Natural killer cell (primary cell): ENCODE measurements at regions of chr6 and their contacts with region 1.

Region 1: DNA sequence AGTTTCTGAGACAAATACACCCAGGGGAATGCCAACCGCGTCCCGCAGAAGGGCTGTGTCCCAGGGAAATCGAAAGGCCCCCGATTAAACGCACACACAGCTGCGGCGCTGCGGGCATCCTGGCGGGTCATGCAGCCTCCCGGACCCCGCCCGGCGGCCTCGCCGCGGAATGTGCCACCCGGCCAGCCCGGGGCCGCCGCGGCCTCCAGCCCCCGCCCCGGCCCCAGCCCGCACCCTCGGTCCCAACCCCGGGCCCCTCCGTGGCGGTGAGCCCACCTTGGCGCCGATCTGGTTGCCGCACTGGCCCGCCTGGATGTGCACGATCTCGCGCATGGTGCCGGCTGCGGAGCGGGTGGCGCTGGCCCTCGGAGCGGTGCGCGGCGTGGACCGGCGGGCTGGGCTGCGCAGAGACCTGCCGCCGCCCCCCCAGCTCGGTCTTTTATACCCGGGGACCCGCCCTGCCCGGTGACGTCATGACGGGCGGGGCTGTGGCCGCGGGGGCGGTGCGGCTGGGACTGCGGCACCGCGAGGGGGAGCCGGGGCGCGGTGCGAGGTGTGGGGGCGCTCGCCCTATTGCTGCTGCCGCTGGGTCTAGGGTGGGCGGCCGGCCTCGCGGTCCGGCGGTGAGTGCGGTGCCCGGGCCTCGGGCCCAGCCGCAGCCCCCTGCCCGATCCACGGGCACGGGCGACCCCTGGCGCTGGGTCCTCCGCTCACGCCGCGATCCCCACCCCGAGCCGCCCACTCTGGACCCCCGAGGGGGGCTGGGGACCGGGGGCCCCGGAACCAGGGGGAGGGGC is at the start of gene TUBB2A:
- DNase-seq: peak; percentile 86 to 93
- ATAC-seq: peak; percentile 83 to 88 (median 88)
- H3K4me3 ChIP-seq: peak within 1 kb of the TSS; percentile 53
- H3K4me3 Mint-ChIP-seq: peak within 1 kb of the TSS; percentile 90
- H3K27ac ChIP-seq: no peak within 1 kb of the TSS
- H3K27ac Mint-ChIP-seq: peak within 1 kb of the TSS; percentile 66 to 68
- H3K4me1 ChIP-seq: peaks cover 27% of the 10 kb centered on the region
- H3K4me1 Mint-ChIP-seq: peaks cover 9 to 19% of the 10 kb centered on the region in 2 donors
- H3K27me3 ChIP-seq: peaks cover 3% of the 10 kb centered on the region
- H3K27me3 Mint-ChIP-seq: peaks cover 8 to 12% of the 10 kb centered on the region in 2 donors
- CTCF ChIP-seq: peak; percentile 45
- total RNA-seq, gene TUBB2A: 9.2 to 13.2 (median 11.4) TPM

Region 2: DNA sequence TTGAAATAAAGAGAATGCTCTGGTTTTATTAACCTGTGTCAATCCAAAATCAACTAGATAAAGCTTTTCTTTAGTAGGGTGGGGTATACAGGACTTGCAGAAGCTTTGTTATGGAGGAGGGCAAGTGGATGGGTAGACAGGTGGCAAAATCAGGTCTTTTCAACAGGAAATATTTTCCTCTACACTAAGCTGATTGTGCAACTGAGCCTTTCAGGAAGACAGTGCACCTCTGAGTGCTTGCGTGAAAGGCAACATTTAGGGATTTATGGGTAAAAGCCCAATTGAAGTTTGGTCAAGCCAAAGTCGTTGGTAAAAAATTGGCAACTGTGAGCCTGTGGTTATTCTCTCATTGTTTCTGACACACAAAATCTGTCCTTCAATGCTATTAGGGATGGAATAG is 23.8 kb after region 1 on chr6:
- intact Hi-C with region 1: loop called (anchors 1 kb)
- DNase-seq: no peak
- ATAC-seq: no peak
- H3K4me3 ChIP-seq: no peak overlapping the region
- H3K4me3 Mint-ChIP-seq: no peak overlapping the region
- H3K27ac ChIP-seq: no peak overlapping the region
- H3K27ac Mint-ChIP-seq: no peak overlapping the region
- H3K4me1 ChIP-seq: no peaks in the 10 kb centered on the region
- H3K4me1 Mint-ChIP-seq: no peaks in the 10 kb centered on the region
- H3K27me3 ChIP-seq: no peaks in the 10 kb centered on the region
- H3K27me3 Mint-ChIP-seq: peaks cover 19 to 21% of the 10 kb centered on the region in 2 donors
- CTCF ChIP-seq: no peak